Caco-2 (cell line): ENCODE measurements at regions of chr11 and their contacts with region 1.

Region 1: DNA sequence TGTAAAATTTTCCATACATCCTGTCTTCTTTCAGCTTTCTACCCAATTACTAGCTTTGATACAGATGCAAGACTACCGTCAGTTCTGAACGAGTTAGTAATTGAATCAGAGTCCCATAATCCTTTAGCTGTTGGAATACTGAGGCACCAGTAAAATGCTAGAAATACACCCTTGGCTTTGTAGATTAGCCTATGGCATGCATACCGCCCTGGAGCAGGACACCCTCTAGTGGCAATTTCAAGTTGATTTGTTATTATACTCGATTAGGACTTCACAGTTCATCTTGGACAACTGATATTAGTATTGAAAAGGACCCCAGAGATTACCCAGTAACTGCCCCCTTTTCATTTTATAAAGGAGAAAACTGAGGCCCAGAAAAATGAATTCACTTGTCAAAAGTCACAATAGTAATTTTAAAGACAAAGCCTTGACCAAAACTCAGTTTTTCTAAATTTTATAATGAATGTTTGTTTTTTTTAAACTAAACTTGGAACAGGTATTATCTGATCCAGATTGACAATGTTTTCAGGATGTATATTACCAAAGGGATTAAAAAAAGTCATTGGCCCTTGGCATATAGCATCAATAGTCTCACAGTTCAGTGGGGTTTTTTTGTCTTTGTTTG is 72.6 kb downstream of the HIPK3 start:
- DNase-seq: peak; percentile 51 to 71
- H3K4me3 ChIP-seq: no peak overlapping the region
- H3K4me3 Mint-ChIP-seq: no peak overlapping the region
- H3K27ac Mint-ChIP-seq: no peak overlapping the region
- H3K4me1 ChIP-seq: peaks cover under 1% of the 10 kb centered on the region
- H3K4me1 Mint-ChIP-seq: peaks cover 13% of the 10 kb centered on the region
- H3K27me3 ChIP-seq: no peaks in the 10 kb centered on the region
- H3K27me3 Mint-ChIP-seq: no peaks in the 10 kb centered on the region
- CTCF ChIP-seq: peak; percentile 71 to 78

Region 2: GRCh38 chr11:32960553-32961164 is 369.2 kb before region 1 on chr11:
- CTCF ChIA-PET with region 1: no interaction called
- POLR2A ChIA-PET with region 1: no interaction called
- intact Hi-C with region 1: loop called (anchors 2 kb)
- DNase-seq: peak in 1 of 2 experiments; percentile 40
- H3K4me3 ChIP-seq: no peak overlapping the region
- H3K4me3 Mint-ChIP-seq: no peak overlapping the region
- H3K27ac Mint-ChIP-seq: no peak overlapping the region
- H3K4me1 ChIP-seq: no peaks in the 10 kb centered on the region
- H3K4me1 Mint-ChIP-seq: no peaks in the 10 kb centered on the region
- H3K27me3 ChIP-seq: no peaks in the 10 kb centered on the region
- H3K27me3 Mint-ChIP-seq: no peaks in the 10 kb centered on the region
- CTCF ChIP-seq: peak; percentile 58 to 60

Region 3: GRCh38 chr11:33089776-33090175 is 240.0 kb before region 1 on chr11:
- CTCF ChIA-PET with region 1: no interaction called
- POLR2A ChIA-PET with region 1: no interaction called
- intact Hi-C with region 1: loop called (anchors 10 kb)
- DNase-seq: no peak
- H3K4me3 ChIP-seq: no peak overlapping the region
- H3K4me3 Mint-ChIP-seq: no peak overlapping the region
- H3K27ac Mint-ChIP-seq: no peak overlapping the region
- H3K4me1 ChIP-seq: peaks cover 20% of the 10 kb centered on the region
- H3K4me1 Mint-ChIP-seq: peaks cover 22% of the 10 kb centered on the region
- H3K27me3 ChIP-seq: no peaks in the 10 kb centered on the region
- H3K27me3 Mint-ChIP-seq: no peaks in the 10 kb centered on the region
- CTCF ChIP-seq: peak; percentile 18 to 24

Region 4: GRCh38 chr11:33268945-33269567 is 60.8 kb before region 1 on chr11:
- CTCF ChIA-PET with region 1: no interaction called
- POLR2A ChIA-PET with region 1: no interaction called
- intact Hi-C with region 1: no loop called
- DNase-seq: no peak
- H3K4me3 ChIP-seq: no peak overlapping the region
- H3K4me3 Mint-ChIP-seq: no peak overlapping the region
- H3K27ac Mint-ChIP-seq: no peak overlapping the region
- H3K4me1 ChIP-seq: peaks cover 17% of the 10 kb centered on the region
- H3K4me1 Mint-ChIP-seq: peaks cover 11% of the 10 kb centered on the region
- H3K27me3 ChIP-seq: no peaks in the 10 kb centered on the region
- H3K27me3 Mint-ChIP-seq: no peaks in the 10 kb centered on the region
- CTCF ChIP-seq: no peak

Region 5: DNA sequence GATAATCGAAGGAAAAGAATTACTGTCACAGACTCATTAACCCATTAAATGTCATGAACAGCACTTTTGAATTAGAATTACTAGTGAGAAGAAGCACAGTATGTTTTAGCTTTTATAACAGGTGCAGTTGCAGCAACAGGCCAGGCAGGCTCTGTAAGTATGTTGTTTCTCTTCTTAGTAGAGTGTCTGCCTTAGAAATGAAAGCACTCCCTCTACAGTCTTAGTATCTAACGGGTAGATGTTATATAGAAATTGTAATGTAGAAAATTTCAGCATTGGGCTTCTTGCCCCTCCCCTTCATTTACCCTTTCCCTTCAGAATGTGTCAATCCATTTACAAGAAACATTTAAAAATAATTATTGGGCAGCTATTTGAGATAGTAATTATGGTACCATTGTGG is 14.8 kb after region 1 on chr11:
- CTCF ChIA-PET with region 1: no interaction called
- POLR2A ChIA-PET with region 1: no interaction called
- intact Hi-C with region 1: no loop called
- DNase-seq: no peak
- H3K4me3 ChIP-seq: no peak overlapping the region
- H3K4me3 Mint-ChIP-seq: no peak overlapping the region
- H3K27ac Mint-ChIP-seq: no peak overlapping the region
- H3K4me1 ChIP-seq: no peaks in the 10 kb centered on the region
- H3K4me1 Mint-ChIP-seq: no peaks in the 10 kb centered on the region
- H3K27me3 ChIP-seq: no peaks in the 10 kb centered on the region
- H3K27me3 Mint-ChIP-seq: no peaks in the 10 kb centered on the region
- CTCF ChIP-seq: peak in 1 of 2 experiments; percentile 22